ENCODE measurements at regions of chr1 and their contacts with region 1.

Region 1: DNA sequence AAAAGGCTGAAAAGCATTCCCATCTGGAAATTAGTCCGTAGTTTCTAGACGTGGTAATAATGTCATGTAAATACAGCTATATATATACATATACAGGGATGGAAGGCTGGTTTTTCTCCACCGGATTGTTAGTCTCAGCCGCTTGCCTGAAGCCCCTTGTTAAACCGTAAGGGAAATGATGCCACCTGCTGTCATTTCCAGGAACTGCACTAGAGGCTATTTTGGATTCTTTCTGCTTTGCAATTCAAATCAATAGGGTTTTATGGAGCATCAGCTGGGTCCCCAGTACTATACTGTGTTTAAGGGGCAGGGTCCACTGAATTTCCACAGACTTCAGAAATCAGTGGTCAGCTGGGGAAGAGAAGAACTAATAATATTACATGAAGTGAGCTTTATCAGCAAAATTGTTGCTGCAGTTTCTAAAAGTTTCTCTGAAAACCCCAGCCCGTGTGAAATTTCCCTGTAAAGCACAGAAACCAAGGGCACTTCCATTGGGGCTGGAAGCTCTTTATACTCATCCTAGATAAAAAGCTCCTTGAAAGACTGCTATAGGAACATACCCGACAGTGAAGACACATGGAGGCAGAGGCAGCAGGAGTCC is 33.8 kb upstream of the MPZL1 start:
- DNase-seq: peak; percentile 93
- H3K4me3 Mint-ChIP-seq: no peak overlapping the region
- H3K27ac Mint-ChIP-seq: no peak overlapping the region
- H3K4me1 Mint-ChIP-seq: peaks cover 26% of the 10 kb centered on the region
- H3K27me3 Mint-ChIP-seq: no peaks in the 10 kb centered on the region
- CTCF ChIP-seq: peak; percentile 97

Region 2: DNA sequence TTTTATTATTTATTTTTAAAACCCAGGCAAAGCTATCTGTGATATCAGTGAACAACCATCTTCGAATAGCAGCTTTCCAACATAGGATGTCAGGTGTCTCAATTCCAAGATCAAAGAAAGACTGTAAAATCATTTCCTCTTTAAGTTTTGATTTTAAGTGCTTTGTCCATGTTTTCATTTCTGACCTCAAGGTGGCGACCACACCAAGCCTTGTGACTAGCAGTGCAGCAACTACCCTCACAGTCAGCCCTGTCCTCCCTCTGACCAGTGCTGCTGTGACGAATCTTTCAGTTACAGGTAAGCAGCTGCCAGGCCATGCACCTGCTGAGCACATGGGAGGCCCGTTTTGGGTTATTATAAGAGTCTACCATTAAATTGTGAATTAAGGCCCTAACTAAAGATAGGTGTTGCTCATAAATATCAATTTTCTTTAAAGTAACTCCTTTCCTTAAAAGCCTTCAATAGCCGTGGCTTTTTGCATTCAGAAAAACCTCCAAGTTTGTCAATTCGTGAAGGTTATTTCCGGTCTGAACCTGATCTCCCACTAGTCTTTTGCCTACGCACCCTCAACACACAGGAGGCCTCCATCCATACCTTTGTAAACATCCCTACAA is 286.7 kb before region 1 on chr1:
- CTCF ChIA-PET with region 1: interaction called, 5 read pairs
- POLR2A ChIA-PET with region 1: no interaction called
- intact Hi-C with region 1: loop called (anchors 1 kb)
- DNase-seq: peak; percentile 76
- H3K4me3 Mint-ChIP-seq: no peak overlapping the region
- H3K27ac Mint-ChIP-seq: peak overlapping the region; percentile 23
- H3K4me1 Mint-ChIP-seq: peaks cover 6% of the 10 kb centered on the region
- H3K27me3 Mint-ChIP-seq: no peaks in the 10 kb centered on the region
- CTCF ChIP-seq: peak; percentile 72

Region 3: GRCh38 chr1:167573026-167573425 is 115.0 kb before region 1 on chr1:
- CTCF ChIA-PET with region 1: interaction called, 36 read pairs
- POLR2A ChIA-PET with region 1: no interaction called
- intact Hi-C with region 1: no loop called
- DNase-seq: peak; percentile 57
- H3K4me3 Mint-ChIP-seq: no peak overlapping the region
- H3K27ac Mint-ChIP-seq: peak overlapping the region; percentile 76
- H3K4me1 Mint-ChIP-seq: peaks cover 18% of the 10 kb centered on the region
- H3K27me3 Mint-ChIP-seq: no peaks in the 10 kb centered on the region
- CTCF ChIP-seq: no peak

Region 4: GRCh38 chr1:167605576-167605975 is 82.4 kb before region 1 on chr1:
- CTCF ChIA-PET with region 1: interaction called, 400 read pairs
- POLR2A ChIA-PET with region 1: interaction called, 52 read pairs
- intact Hi-C with region 1: loop called (anchors 1 kb)
- DNase-seq: no peak
- H3K4me3 Mint-ChIP-seq: no peak overlapping the region
- H3K27ac Mint-ChIP-seq: no peak overlapping the region
- H3K4me1 Mint-ChIP-seq: peaks cover 7% of the 10 kb centered on the region
- H3K27me3 Mint-ChIP-seq: no peaks in the 10 kb centered on the region
- CTCF ChIP-seq: no peak

Region 5: DNA sequence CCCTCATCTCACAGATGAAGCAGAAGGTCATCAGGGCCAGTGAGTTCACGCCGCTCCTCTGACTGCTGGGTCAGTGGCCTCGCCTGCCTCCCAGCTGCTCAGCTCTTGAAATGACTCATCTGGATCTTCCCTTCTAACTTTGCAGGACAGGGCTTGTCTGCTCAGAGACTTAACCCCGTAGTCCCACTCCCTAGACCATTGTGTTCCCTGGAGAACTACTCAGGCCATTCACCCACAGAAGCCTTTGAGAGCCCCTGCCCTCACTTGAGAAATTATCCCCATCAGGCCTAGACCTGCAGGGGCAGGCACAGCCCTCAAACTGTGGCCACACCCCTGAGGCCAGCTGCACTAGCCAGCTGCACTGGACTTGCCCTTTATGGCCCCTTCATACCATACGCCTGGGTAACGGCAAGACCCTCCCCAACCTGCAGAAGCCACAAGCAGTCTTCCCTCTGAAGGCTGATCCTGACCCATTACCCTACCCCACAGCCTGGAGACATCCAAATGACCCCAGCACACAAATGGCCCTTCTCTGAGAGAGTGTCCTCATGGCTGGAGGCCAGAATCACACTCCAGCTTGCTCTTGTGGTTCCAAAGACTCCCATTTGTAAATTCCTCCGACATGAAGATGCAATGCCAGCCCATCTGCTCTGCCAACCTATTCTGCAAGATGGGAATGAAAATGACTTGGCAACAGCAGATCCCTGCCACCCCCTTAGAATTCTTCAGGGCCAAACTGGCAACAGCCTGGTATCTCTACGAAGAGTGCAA is 24.8 kb before region 1 on chr1:
- CTCF ChIA-PET with region 1: interaction called, 69 read pairs
- POLR2A ChIA-PET with region 1: interaction called, 27 read pairs
- intact Hi-C with region 1: no loop called
- DNase-seq: peak; percentile 99
- H3K4me3 Mint-ChIP-seq: peak overlapping the region; percentile 51
- H3K27ac Mint-ChIP-seq: peak overlapping the region; percentile 71
- H3K4me1 Mint-ChIP-seq: peaks cover 71% of the 10 kb centered on the region
- H3K27me3 Mint-ChIP-seq: no peaks in the 10 kb centered on the region
- CTCF ChIP-seq: no peak

Region 6: DNA sequence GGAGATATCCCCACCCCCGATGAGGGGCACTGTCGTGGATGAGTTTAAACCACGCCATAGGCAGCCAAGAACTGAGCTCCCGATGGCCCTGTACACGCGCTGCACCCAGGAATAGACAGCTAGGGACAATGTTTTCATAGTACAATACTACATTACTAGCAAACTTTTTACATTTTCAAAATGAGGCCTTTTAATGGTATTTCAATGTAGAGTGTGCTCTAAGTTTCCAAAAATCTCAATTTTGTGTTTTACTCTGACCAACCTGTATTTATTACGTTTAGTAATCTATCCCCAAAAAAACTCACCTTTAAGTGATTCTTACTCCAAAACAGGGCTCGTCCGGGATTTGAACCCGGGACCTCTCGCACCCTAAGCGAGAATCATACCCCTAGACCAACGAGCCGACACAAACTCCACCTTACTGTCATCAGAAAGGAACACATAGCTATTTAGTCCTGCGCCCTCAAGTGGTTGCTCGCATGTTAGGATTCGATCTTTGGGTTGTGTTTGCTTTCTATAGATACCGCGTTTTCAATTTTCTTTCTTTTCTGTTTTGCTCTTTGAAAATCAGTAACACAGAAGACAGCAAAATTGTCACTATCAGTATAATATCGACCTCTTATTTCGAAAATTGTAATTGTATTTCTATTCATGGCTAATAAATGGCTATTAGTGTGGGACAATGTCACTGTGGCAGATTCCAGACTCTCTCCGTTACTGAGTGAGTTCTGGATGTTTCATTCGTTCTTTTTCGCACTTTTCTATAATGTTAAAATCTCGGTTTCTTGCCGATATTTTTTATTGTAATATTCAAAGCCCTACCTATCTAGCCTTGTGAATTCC is 27.4 kb after region 1 on chr1:
- CTCF ChIA-PET with region 1: interaction called, 19 read pairs
- POLR2A ChIA-PET with region 1: interaction called, 7 read pairs
- intact Hi-C with region 1: no loop called
- DNase-seq: peak; percentile 97
- H3K4me3 Mint-ChIP-seq: peak overlapping the region; percentile 88
- H3K27ac Mint-ChIP-seq: peak overlapping the region; percentile 91
- H3K4me1 Mint-ChIP-seq: peaks cover 16% of the 10 kb centered on the region
- H3K27me3 Mint-ChIP-seq: no peaks in the 10 kb centered on the region
- CTCF ChIP-seq: peak; percentile 98